Keratinocyte (primary cell): ENCODE measurements at regions of chr10 and their contacts with region 1.

Region 1: DNA sequence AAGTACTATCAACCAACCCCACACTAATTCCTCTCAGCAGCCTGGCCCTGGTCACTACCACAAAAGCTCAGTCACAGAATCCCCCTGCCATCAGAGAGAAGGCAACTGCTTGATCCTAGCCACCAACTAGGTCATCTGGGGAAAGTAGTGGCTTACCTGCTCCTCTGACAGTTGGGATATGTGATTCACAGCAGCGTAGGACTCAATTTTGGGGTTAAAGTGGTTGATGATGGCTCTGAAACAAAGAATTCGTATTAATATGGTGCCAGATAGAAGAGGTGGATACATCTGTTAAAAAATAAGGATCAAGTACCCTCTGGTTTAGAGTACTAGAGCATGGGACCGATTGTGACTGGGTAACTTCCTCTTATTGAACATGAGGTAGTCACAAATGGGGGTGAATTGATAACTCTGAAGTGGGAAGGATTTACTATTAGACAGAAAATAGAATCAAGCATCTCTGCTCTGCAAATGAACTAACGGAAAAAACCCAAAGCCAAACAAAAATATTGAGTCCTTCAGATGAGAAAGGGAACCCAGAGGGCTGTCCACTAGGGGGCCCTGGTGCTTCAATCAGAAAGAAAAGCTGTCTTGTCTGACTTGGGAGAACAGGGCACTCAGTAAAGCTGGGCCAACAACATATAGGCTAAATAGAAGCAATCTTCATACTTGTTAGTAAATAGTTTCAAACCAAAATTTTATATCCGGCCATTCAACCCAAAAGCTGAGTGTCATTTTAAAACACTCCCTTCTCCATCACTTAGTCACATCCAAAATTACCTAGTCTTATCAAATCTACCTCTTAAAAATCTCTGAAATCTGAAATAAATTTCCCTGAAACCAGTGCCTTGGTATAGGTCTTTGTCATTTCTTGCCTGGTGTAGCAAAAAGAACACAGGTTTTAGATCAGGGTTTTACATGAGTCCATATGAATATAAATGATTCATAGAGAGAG is 45.9 kb upstream of the KCNIP2 start:
- DNase-seq: peak; percentile 19
- H3K4me3 ChIP-seq: no peak overlapping the region
- H3K27ac ChIP-seq: no peak overlapping the region
- H3K4me1 ChIP-seq: peaks cover 3% of the 10 kb centered on the region
- H3K27me3 ChIP-seq: no peaks in the 10 kb centered on the region
- CTCF ChIP-seq: peak; percentile 70 to 84 (median 83)

Region 2: DNA sequence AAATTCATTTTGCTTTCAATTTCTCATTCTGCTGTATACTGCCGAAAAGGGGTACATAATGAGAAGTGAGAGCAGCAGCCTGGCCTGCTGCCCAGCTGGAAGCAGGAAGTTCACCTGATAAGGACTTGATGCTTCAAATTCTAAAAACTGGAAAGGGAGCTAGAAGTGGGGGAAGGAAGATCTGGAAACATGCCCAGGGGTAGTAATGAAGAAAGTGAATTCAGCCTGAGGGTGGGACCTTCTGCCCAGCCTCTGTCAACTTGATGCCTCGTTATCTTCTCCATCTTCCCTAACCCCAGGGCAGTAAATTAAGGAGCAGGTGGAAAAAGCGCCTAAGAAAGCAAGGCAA is 97.1 kb after region 1 on chr10:
- dilution Hi-C with region 1: loop called (anchors 25 kb)
- DNase-seq: no peak
- H3K4me3 ChIP-seq: no peak overlapping the region
- H3K27ac ChIP-seq: no peak overlapping the region
- H3K4me1 ChIP-seq: no peaks in the 10 kb centered on the region
- H3K27me3 ChIP-seq: no peaks in the 10 kb centered on the region
- CTCF ChIP-seq: no peak